ENCODE measurements at regions of chr5 and their contacts with region 1.

Region 1: DNA sequence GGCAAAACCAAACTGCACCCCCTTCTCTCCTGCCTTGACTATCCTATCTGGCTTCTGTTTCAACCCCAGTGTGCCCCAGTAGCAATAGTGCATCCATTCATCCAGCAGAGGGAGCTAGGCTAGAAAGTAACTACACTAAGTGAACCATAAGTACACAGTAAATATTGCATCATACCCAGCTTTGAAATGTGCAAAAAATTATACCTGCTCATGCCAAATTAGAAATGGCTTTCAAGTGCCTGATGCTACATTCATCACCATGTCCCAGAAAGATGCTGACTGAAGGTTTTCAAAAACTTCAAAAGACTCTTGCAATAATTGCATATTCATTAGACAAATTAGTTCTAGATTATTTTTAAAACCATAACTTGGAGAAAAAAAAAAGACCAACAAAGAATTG is 153.5 kb downstream of the PRELID2 start:
- DNase-seq: peak; percentile 72
- H3K4me3 Mint-ChIP-seq: no peak overlapping the region
- H3K27ac Mint-ChIP-seq: no peak overlapping the region
- H3K4me1 Mint-ChIP-seq: peaks cover 20% of the 10 kb centered on the region
- H3K27me3 Mint-ChIP-seq: no peaks in the 10 kb centered on the region
- CTCF ChIP-seq: peak; percentile 73

Region 2: GRCh38 chr5:145246961-145247744 is 434.5 kb before region 1 on chr5:
- CTCF ChIA-PET with region 1: no interaction called
- intact Hi-C with region 1: loop called (anchors 10 kb)
- DNase-seq: no peak
- H3K4me3 Mint-ChIP-seq: no peak overlapping the region
- H3K27ac Mint-ChIP-seq: peak overlapping the region; percentile 25
- H3K4me1 Mint-ChIP-seq: peaks cover 30% of the 10 kb centered on the region
- H3K27me3 Mint-ChIP-seq: no peaks in the 10 kb centered on the region
- CTCF ChIP-seq: no peak

Region 3: DNA sequence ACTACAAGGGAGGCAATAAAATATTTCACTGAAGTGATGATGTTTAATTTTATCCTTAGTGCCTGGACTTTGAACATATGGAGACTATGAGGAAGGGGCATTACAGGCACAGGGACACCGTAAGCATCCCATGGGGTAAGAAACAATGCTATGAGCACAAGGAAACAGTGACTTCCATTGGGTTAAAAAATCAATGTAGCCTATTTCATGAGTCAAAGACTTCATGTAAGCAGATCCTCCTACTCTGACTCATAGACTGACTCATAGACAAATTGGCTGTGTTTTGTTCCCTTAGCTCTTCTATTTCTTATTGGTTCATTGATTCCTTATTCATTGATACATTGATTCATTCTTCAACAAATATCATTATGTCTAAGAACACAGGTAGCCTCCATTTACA is 197.5 kb before region 1 on chr5:
- CTCF ChIA-PET with region 1: no interaction called
- intact Hi-C with region 1: loop called (anchors 5 kb)
- DNase-seq: peak; percentile 18
- H3K4me3 Mint-ChIP-seq: no peak overlapping the region
- H3K27ac Mint-ChIP-seq: peak overlapping the region; percentile 38
- H3K4me1 Mint-ChIP-seq: peaks cover 50% of the 10 kb centered on the region
- H3K27me3 Mint-ChIP-seq: no peaks in the 10 kb centered on the region
- CTCF ChIP-seq: no peak

Region 4: DNA sequence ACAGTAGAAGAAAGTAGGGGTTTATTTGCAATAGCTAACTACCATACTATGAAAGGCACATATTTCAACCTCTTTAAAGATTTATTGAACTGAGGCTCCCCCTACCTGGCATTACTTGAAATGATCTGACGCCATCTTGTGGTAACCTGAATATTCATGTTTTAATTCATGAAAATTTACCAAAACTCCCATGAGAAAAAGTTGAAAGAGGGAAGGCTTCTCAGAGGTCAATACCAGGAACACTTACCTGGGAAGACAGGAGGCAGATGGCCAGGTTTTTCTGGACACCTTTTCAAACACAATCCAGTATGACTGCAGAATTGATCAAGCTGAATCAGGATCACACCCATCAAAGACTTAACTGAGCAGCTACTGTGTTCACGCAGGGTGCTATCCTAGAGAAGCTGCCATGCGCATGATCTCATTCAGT is 144.1 kb after region 1 on chr5:
- CTCF ChIA-PET with region 1: interaction called, 7 read pairs
- intact Hi-C with region 1: loop called (anchors 2 kb)
- DNase-seq: peak; percentile 31
- H3K4me3 Mint-ChIP-seq: no peak overlapping the region
- H3K27ac Mint-ChIP-seq: no peak overlapping the region
- H3K4me1 Mint-ChIP-seq: peaks cover 17% of the 10 kb centered on the region
- H3K27me3 Mint-ChIP-seq: no peaks in the 10 kb centered on the region
- CTCF ChIP-seq: peak; percentile 89

Region 5: GRCh38 chr5:146049014-146049703 is 367.5 kb after region 1 on chr5:
- CTCF ChIA-PET with region 1: no interaction called
- intact Hi-C with region 1: loop called (anchors 1 kb)
- DNase-seq: peak; percentile 78
- H3K4me3 Mint-ChIP-seq: no peak overlapping the region
- H3K27ac Mint-ChIP-seq: peak overlapping the region; percentile 22
- H3K4me1 Mint-ChIP-seq: peaks cover 35% of the 10 kb centered on the region
- H3K27me3 Mint-ChIP-seq: no peaks in the 10 kb centered on the region
- CTCF ChIP-seq: peak; percentile 86